Heart left ventricle (tissue), 16 donors: ENCODE measurements at regions of chr6 and their contacts with region 1.

Region 1: DNA sequence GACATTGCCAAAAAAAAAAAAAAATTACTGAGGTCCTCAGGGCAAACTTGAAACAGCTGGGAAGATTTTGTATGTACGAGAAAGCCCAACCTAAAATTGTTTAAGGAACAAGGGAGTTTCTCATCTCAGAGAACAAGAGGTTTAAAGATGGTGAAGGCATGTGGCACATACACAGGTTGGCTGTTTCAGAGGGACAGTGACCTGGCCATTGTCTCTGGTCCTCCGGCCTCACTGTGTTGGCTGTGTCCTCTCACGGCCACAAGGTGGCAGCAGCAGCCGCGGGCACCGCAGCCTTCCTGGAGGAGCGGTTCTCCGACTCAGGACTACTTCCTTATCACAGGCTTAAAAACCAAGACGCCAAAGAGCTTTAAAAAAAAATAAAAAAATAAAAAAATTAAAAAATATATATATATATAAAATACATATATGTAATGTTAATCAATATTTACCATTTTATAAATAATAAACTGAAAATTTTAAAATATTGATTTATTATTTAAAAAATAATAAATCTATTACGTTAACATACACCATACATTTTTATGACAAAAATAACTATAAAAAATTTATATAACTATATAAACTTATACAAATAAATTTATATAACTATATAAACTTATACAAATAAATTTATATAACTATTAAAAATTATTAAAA is 52.8 kb downstream of the GTF2H5 start:
- DNase-seq: peak; percentile 76 to 90 (median 83)
- ATAC-seq: peak; percentile 91 to 97 (median 96)
- H3K4me3 ChIP-seq: no peak overlapping the region
- H3K27ac ChIP-seq: no peak overlapping the region
- H3K4me1 ChIP-seq: peaks cover 0 to 7% (median 0%) of the 10 kb centered on the region in 12 donors
- H3K27me3 ChIP-seq: no peaks in the 10 kb centered on the region
- CTCF ChIP-seq: peak; percentile 91 to 98 (median 97)
- POLR2A ChIP-seq: no peak

Region 2: GRCh38 chr6:158518191-158519127 is 297.5 kb after region 1 on chr6:
- intact Hi-C with region 1: loop called (anchors 2 to 10 kb)
- DNase-seq: peak in 4 of 5 donors; percentile 38 to 75 (median 61)
- ATAC-seq: peak; percentile 66 to 84 (median 73)
- H3K4me3 ChIP-seq: peak overlapping the region in 6 of 12 donors; percentile 8 to 39 (median 27)
- H3K27ac ChIP-seq: no peak overlapping the region
- H3K4me1 ChIP-seq: peaks cover 0 to 13% (median 8%) of the 10 kb centered on the region in 12 donors
- H3K27me3 ChIP-seq: peaks cover 0 to 47% (median 21%) of the 10 kb centered on the region in 9 donors
- CTCF ChIP-seq: peak; percentile 13 to 68 (median 47)
- POLR2A ChIP-seq: no peak

Region 3: GRCh38 chr6:158605266-158605878 is 384.5 kb after region 1 on chr6:
- intact Hi-C with region 1: loop called (anchors 2 to 10 kb)
- DNase-seq: peak in 1 of 5 donors; percentile 48
- ATAC-seq: peak in 3 of 4 donors; percentile 38 to 63 (median 60)
- H3K4me3 ChIP-seq: no peak overlapping the region
- H3K27ac ChIP-seq: no peak overlapping the region
- H3K4me1 ChIP-seq: peaks cover 0 to 11% (median 6%) of the 10 kb centered on the region in 12 donors
- H3K27me3 ChIP-seq: no peaks in the 10 kb centered on the region
- CTCF ChIP-seq: peak; percentile 58 to 81 (median 70)
- POLR2A ChIP-seq: no peak

Region 4: GRCh38 chr6:158697811-158698210 is 476.9 kb after region 1 on chr6:
- intact Hi-C with region 1: loop called in 6 of 10 experiments (anchors 5 to 10 kb)
- DNase-seq: no peak
- ATAC-seq: peak in 2 of 4 donors; percentile 41 to 43
- H3K4me3 ChIP-seq: no peak overlapping the region
- H3K27ac ChIP-seq: no peak overlapping the region
- H3K4me1 ChIP-seq: no peaks in the 10 kb centered on the region
- H3K27me3 ChIP-seq: no peaks in the 10 kb centered on the region
- CTCF ChIP-seq: no peak
- POLR2A ChIP-seq: no peak